K562 (cell line): ENCODE measurements at regions of chr5 and their contacts with region 1.

Region 1: GRCh38 chr5:135102716-135103574 is 68.9 kb upstream of the PITX1 start:
- DNase-seq: no peak
- ATAC-seq: no peak
- H3K4me3 ChIP-seq: no peak overlapping the region
- H3K27ac ChIP-seq: no peak overlapping the region
- H3K4me1 ChIP-seq: peaks cover 21 to 25% of the 10 kb centered on the region in 2 experiments; a peak in 4 of 5 replicates
- H3K27me3 ChIP-seq: no peaks in the 10 kb centered on the region
- CTCF ChIP-seq: no peak
- EP300 ChIP-seq: no peak
- POLR2A ChIP-seq: no peak
- RAD21 ChIP-seq: no peak

Region 2: DNA sequence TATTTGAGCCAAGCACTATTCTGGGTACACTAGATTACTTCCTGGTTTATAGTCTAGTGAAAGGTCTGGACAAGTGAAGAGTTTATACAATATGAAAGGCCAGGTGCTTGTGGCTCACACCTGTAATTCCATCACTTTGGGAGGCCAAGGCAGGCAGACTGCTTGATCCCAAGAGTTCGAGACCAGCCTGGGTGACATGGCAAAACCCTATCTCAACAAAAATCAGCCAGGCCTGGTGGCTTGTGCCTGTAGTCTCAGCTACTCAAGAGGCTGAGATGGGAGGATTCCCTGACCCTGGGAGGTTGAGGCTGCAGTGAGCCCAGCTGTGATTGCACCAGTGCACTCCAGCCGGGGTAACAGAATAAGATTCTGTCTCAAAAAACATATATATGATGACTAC is 238.2 kb before region 1 on chr5:
- CTCF ChIA-PET with region 1: no interaction called
- POLR2A ChIA-PET with region 1: no interaction called
- in situ Hi-C with region 1: no loop called
- intact Hi-C with region 1: no loop called
- DNase-seq: no peak
- ATAC-seq: peak; percentile 44
- H3K4me3 ChIP-seq: no peak overlapping the region
- H3K27ac ChIP-seq: no peak overlapping the region; the same call in 2 of the 3 replicates
- H3K4me1 ChIP-seq: peaks cover 0 to 8% of the 10 kb centered on the region in 2 experiments; a peak in 2 of 5 replicates
- H3K27me3 ChIP-seq: no peaks in the 10 kb centered on the region
- CTCF ChIP-seq: no peak
- EP300 ChIP-seq: no peak
- POLR2A ChIP-seq: no peak
- RAD21 ChIP-seq: no peak

Region 3: GRCh38 chr5:135116160-135116561 is 13.2 kb after region 1 on chr5:
- CTCF ChIA-PET with region 1: no interaction called
- POLR2A ChIA-PET with region 1: interaction called, 18 read pairs
- in situ Hi-C with region 1: no loop called
- intact Hi-C with region 1: no loop called
- DNase-seq: no peak
- ATAC-seq: 0 out of 3 replicates have a peak, but pooled peaks have one; percentile 5
- H3K4me3 ChIP-seq: no peak overlapping the region
- H3K27ac ChIP-seq: no peak overlapping the region
- H3K4me1 ChIP-seq: peaks cover 13 to 24% of the 10 kb centered on the region in 2 experiments; a peak in 4 of 5 replicates
- H3K27me3 ChIP-seq: no peaks in the 10 kb centered on the region
- CTCF ChIP-seq: no peak
- EP300 ChIP-seq: no peak
- POLR2A ChIP-seq: no peak
- RAD21 ChIP-seq: no peak

Region 4: DNA sequence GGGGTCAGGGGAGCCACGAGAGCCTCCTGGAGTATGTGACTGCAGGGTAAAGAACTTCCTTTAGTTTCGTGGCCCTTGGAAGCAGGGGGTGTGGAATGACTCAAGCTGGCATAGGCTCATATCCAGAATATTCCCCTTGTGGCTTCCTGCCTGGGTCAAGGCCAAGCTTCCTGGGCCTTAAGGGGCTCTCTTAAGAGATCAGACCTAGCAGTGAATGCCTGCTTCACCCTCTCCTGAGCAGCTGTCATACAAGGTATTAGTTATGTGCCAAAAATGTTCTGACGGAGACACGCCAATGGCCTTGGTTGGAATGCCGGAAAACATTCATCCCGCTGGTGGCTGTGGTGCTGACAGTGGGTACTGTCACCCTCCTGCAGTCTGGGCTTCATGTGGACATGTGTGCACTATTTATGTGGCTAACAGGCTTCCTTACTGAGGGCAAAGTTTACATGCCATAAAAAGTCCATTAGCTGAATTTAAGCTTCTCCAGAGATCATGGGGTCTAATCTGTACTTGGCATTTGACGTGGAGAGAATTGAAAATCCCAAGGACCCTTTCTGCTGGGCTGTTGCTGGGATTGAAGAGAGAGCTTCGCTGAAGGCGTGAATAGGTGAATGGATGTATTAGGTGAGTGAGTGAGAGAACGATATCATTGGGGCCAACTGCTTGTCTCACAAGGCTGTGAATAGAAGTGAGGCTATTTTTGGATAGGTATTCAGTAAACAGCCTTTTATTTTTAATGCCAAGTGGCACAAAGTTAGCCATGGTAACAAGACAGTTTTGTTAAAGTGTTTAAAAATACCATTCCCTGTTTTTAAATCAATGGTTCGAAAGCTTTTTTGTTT is 139.3 kb after region 1 on chr5:
- CTCF ChIA-PET with region 1: no interaction called
- POLR2A ChIA-PET with region 1: no interaction called
- in situ Hi-C with region 1: no loop called
- intact Hi-C with region 1: no loop called
- DNase-seq: no peak
- ATAC-seq: no peak
- H3K4me3 ChIP-seq: no peak overlapping the region
- H3K27ac ChIP-seq: no peak overlapping the region
- H3K4me1 ChIP-seq: peaks cover 22 to 24% of the 10 kb centered on the region in 2 experiments
- H3K27me3 ChIP-seq: peaks cover under 1 to 7% of the 10 kb centered on the region in 2 experiments; a peak in 3 of 5 replicates
- CTCF ChIP-seq: no peak
- EP300 ChIP-seq: no peak
- POLR2A ChIP-seq: no peak
- RAD21 ChIP-seq: no peak

Region 5: GRCh38 chr5:136382071-136382470 is 1279.1 kb after region 1 on chr5:
- CTCF ChIA-PET with region 1: no interaction called
- POLR2A ChIA-PET with region 1: no interaction called
- in situ Hi-C with region 1: no loop called
- intact Hi-C with region 1: no loop called
- DNase-seq: no peak
- ATAC-seq: no peak
- H3K4me3 ChIP-seq: no peak overlapping the region
- H3K27ac ChIP-seq: no peak overlapping the region
- H3K4me1 ChIP-seq: no peaks in the 10 kb centered on the region
- H3K27me3 ChIP-seq: 0 out of 5 replicates have a peak, but pooled peaks cover 0 to 5% of the 10 kb centered on the region in 2 experiments
- CTCF ChIP-seq: no peak
- EP300 ChIP-seq: no peak
- POLR2A ChIP-seq: no peak
- RAD21 ChIP-seq: no peak